AG04450 (cell line): ENCODE measurements at regions of chr18 and their contacts with region 1.

Region 1: DNA sequence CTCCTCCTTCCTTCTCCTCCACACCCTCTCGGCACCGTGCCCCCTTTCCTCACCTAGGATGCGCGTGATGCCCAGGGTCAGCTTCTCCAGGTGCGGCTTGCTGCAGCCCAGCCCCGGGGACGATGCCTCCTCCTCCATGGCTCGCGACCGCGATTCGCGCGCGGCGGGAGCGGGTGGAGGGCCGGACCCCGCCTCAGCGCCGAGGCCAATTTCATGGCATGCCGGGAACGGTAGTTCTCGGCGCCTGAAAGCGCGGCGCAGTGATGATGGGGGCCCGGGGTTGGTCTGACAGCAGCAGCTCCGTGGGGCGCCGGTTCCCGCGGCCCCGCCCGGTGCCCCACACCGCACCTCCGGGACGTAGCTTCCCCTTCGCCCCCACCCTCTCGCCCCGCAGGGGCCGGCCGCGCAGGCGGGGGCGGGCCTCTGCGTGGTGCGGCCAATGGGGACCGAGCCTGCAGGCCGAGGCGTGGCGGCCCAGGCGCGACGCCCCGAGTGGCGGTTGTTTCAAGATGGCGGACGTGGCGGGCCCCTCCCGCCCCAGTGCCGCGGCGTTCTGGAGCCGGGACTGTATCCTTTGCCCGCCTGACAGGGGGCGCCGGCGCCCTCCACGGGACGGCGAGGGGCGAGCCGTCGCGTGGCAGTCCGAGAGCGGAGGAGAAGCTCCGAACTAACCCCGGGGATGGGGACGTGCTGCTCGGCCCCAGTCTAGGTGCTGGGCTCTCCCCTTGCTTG is at the starts of genes KIAA1328 and TPGS2:
- DNase-seq: no peak
- H3K4me3 ChIP-seq: peak within 1 kb of the TSS; percentile 98
- H3K27ac ChIP-seq: peak within 1 kb of the TSS; percentile 83
- H3K27me3 ChIP-seq: no peaks in the 10 kb centered on the region
- CTCF ChIP-seq: peak; percentile 47
- polyA plus RNA-seq, gene KIAA1328: 3.7 and 3.9 TPM in 2 replicates
- polyA plus RNA-seq, gene TPGS2: 295 and 302 TPM in 2 replicates

Region 2: DNA sequence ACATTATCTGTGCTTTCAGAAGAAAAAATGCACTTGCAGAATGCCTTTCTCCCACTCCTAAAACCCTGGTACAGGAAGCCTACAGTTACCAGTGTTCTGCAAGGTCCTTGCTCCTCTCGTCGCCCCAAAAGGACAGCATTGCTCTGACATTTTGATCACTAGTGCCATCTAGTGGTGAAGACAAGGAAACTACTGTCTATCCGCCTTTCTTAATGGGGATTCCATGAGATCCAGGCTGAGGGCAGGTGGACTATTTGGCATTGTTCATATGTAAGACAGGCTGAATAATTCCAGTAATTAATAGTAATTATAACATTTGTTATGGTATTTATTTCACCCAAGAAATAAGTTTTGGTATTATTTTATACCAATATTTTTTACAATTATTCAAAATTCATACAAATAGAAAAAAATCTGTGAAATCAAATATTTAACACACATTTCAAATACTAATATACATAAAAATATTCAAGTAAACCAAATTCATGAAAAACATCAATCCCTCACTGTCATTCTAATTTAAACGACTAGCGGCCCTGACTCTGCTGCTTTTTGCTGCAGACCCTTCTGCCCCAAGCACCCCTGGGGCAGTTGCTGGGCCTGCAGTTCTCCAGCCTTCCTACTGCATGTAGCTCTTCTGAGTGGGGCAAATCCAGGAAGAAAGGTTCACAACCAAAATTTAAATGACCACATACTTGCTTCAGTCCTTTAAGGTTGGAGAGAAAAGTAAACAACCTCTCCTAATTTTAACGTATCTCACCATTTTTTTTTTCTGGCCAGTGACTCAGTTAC is 19.0 kb before region 1 on chr18:
- CTCF ChIA-PET with region 1: interaction called, 12 read pairs
- POLR2A ChIA-PET with region 1: interaction called, 12 read pairs
- DNase-seq: no peak
- H3K4me3 ChIP-seq: no peak overlapping the region
- H3K27ac ChIP-seq: no peak overlapping the region
- H3K27me3 ChIP-seq: no peaks in the 10 kb centered on the region
- CTCF ChIP-seq: peak; percentile 82

Region 3: GRCh38 chr18:36818652-36819051 is 10.1 kb before region 1 on chr18:
- CTCF ChIA-PET with region 1: interaction called, 13 read pairs
- POLR2A ChIA-PET with region 1: interaction called, 3 read pairs
- DNase-seq: no peak
- H3K4me3 ChIP-seq: no peak overlapping the region
- H3K27ac ChIP-seq: no peak overlapping the region
- H3K27me3 ChIP-seq: no peaks in the 10 kb centered on the region
- CTCF ChIP-seq: no peak

Region 4: GRCh38 chr18:36850530-36851201 is 21.9 kb after region 1 on chr18:
- CTCF ChIA-PET with region 1: interaction called, 10 read pairs
- POLR2A ChIA-PET with region 1: interaction called, 3 read pairs
- DNase-seq: peak; percentile 63
- H3K4me3 ChIP-seq: no peak overlapping the region
- H3K27ac ChIP-seq: no peak overlapping the region
- H3K27me3 ChIP-seq: no peaks in the 10 kb centered on the region
- CTCF ChIP-seq: no peak